ENCODE measurements at regions of chr2 and their contacts with region 1.

Region 1: GRCh38 chr2:85538486-85539360 is at the start of gene MAT2A:
- DNase-seq: peak; percentile 80
- H3K4me3 ChIP-seq: peak within 1 kb of the TSS; percentile 100
- H3K27ac ChIP-seq: peak within 1 kb of the TSS; percentile 99
- H3K27me3 ChIP-seq: no peaks in the 10 kb centered on the region
- CTCF ChIP-seq: peak; percentile 80
- polyA plus RNA-seq, gene MAT2A: 362 and 409 TPM in 2 replicates

Region 2: GRCh38 chr2:85354286-85355072 is 184.2 kb before region 1 on chr2 and contains the starts of genes ELMOD3 and RETSAT:
- CTCF ChIA-PET with region 1: no interaction called
- POLR2A ChIA-PET with region 1: interaction called, 23 read pairs
- DNase-seq: peak; percentile 98
- H3K4me3 ChIP-seq: peak within 1 kb of the TSS; percentile 65
- H3K27ac ChIP-seq: peak within 1 kb of the TSS; percentile 47
- H3K27me3 ChIP-seq: no peaks in the 10 kb centered on the region
- CTCF ChIP-seq: no peak
- polyA plus RNA-seq, gene ELMOD3: 17.2 and 17.8 TPM in 2 replicates
- polyA plus RNA-seq, gene RETSAT: 35.5 and 38.0 TPM in 2 replicates

Region 3: GRCh38 chr2:85437488-85438284 is 101.0 kb before region 1 on chr2:
- CTCF ChIA-PET with region 1: no interaction called
- POLR2A ChIA-PET with region 1: interaction called, 81 read pairs
- DNase-seq: no peak
- H3K4me3 ChIP-seq: peak overlapping the region; percentile 50
- H3K27ac ChIP-seq: peak overlapping the region; percentile 89
- H3K27me3 ChIP-seq: no peaks in the 10 kb centered on the region
- CTCF ChIP-seq: no peak

Region 4: GRCh38 chr2:85504778-85505323 is 33.9 kb before region 1 on chr2:
- CTCF ChIA-PET with region 1: interaction called, 4 read pairs
- POLR2A ChIA-PET with region 1: interaction called, 96 read pairs
- DNase-seq: peak; percentile 71
- H3K4me3 ChIP-seq: no peak overlapping the region
- H3K27ac ChIP-seq: peak overlapping the region; percentile 78
- H3K27me3 ChIP-seq: no peaks in the 10 kb centered on the region
- CTCF ChIP-seq: no peak

Region 5: GRCh38 chr2:85551698-85552678 is 13.3 kb after region 1 on chr2:
- CTCF ChIA-PET with region 1: interaction called, 53 read pairs
- POLR2A ChIA-PET with region 1: interaction called, 172 read pairs
- DNase-seq: no peak
- H3K4me3 ChIP-seq: no peak overlapping the region
- H3K27ac ChIP-seq: no peak overlapping the region
- H3K27me3 ChIP-seq: no peaks in the 10 kb centered on the region
- CTCF ChIP-seq: peak; percentile 93

Measured in AG04450 (cell line).